Prostate gland (tissue), 2 donors: ENCODE measurements at regions of chr21 and their contacts with region 1.

Region 1: DNA sequence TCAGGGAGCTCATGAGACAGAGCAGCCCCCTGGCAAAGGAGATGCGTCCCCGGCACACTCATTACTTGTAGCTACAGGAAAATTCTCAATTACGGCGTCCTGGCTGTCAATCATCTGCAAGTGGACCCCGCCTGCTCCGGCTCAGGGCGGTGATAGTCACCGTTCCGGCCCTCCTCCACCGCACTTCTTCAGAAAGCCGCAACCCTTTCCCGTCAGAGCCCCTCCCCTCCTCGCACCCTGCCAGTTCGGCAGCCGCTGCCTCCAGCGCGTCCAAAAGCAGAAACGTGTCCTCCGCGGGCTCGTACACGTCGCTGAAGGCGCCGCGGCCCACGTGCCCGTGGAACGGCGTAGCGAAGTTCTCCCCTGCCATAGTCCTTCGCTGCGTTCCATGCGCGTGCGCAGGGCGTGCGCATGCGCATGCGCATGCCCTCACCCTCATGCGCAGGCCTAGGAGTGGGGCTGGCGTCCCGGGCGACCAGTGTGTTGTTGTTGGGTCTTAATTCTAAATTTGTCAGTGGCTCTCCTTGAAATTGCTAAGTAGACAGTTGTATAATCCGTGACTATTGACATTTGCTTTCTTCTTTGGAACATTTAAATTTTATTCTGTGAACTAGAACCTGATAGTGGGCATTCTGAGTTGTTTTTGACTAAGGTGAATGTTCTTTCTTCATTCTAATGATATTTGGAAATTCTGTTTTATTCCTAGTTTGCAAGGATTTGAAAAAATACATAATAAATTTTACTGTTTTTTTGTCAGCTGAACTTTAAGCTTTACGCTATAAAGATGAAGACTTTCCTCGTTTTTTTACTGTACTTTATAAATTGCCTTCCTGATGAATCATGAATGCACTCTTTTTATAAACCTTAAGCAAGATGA is 107.5 kb downstream of the LTN1 start:
- DNase-seq: peak; percentile 80
- H3K4me3 ChIP-seq: peak overlapping the region; percentile 36 to 54
- H3K27ac ChIP-seq: peak overlapping the region; percentile 84 to 88
- H3K4me1 ChIP-seq: peaks cover 5% of the 10 kb centered on the region
- H3K27me3 ChIP-seq: no peaks in the 10 kb centered on the region
- CTCF ChIP-seq: peak in 2 of 4 experiments; percentile 7 to 30
- POLR2A ChIP-seq: peak; percentile 77

Region 2: GRCh38 chr21:28771790-28772501 is 113.3 kb before region 1 on chr21:
- intact Hi-C with region 1: loop called (anchors 5 kb)
- DNase-seq: no peak
- H3K4me3 ChIP-seq: no peak overlapping the region
- H3K27ac ChIP-seq: peak overlapping the region; percentile 37 to 49
- H3K4me1 ChIP-seq: no peaks in the 10 kb centered on the region
- H3K27me3 ChIP-seq: no peaks in the 10 kb centered on the region
- CTCF ChIP-seq: no peak
- POLR2A ChIP-seq: no peak

Region 3: DNA sequence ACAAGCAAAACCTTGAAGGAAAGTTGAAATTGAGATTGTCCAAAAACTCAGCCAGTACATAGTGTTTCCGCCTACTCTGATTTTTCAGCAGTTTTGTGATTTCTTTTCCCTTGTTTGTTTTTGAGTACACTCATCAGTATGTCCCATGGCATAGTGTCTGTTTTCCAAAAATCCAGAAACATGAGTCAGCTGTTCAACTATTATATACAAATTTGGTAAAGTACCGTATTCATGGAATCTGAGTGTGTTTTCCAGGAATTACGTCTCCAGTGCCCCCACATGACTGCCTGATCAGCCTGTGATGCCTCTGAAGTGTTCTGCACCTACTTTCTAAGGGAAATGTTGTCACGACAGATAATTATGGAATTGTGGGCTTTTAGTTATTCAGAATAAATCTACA is 79.3 kb before region 1 on chr21:
- intact Hi-C with region 1: no loop called
- DNase-seq: no peak
- H3K4me3 ChIP-seq: no peak overlapping the region
- H3K27ac ChIP-seq: no peak overlapping the region
- H3K4me1 ChIP-seq: no peaks in the 10 kb centered on the region
- H3K27me3 ChIP-seq: no peaks in the 10 kb centered on the region
- CTCF ChIP-seq: no peak
- POLR2A ChIP-seq: no peak

Region 4: DNA sequence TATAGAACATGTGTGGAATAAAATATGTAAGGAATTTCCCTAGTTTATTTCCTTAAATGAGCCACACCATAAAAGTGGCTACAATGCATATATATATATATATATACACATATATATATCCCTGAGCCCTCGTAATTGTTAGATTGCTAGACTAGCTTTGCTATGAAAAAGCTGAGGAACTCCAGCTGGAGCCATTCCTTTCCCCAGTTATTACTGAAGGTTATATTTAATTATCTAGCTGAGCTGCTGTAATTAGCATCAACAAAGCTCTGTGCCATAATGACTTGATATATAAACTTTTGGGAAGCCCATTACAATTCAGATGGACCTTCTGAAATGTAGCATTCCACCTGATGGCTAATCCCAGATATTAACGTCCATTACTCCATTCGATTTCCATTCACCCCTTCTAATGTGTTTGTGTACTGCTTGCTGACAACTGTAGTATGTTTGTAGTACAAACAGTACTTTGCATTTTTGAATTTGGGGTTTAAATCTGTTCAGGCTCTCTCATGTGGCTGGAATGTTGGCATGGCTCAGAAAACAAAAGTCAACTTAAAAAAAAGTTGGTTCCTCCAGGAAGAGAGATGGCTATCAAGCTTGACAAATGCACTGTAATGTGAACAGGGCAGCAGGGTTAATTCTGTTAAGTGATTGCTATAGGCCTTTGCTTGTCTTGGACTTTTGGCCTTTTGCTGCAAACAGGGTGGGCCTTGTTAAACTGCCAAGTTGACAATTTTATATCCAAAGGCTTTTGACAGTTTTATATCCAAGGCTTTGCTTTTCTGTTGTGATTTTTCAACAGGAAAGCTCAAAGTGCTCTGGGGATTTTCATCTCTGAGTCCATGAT is 62.5 kb before region 1 on chr21:
- intact Hi-C with region 1: loop called (anchors 5 kb)
- DNase-seq: peak; percentile 36
- H3K4me3 ChIP-seq: no peak overlapping the region
- H3K27ac ChIP-seq: peak overlapping the region; percentile 17 to 57
- H3K4me1 ChIP-seq: peaks cover 4% of the 10 kb centered on the region
- H3K27me3 ChIP-seq: no peaks in the 10 kb centered on the region
- CTCF ChIP-seq: no peak
- POLR2A ChIP-seq: no peak